ENCODE measurements at regions of chr2 and their contacts with region 1.

Region 1: DNA sequence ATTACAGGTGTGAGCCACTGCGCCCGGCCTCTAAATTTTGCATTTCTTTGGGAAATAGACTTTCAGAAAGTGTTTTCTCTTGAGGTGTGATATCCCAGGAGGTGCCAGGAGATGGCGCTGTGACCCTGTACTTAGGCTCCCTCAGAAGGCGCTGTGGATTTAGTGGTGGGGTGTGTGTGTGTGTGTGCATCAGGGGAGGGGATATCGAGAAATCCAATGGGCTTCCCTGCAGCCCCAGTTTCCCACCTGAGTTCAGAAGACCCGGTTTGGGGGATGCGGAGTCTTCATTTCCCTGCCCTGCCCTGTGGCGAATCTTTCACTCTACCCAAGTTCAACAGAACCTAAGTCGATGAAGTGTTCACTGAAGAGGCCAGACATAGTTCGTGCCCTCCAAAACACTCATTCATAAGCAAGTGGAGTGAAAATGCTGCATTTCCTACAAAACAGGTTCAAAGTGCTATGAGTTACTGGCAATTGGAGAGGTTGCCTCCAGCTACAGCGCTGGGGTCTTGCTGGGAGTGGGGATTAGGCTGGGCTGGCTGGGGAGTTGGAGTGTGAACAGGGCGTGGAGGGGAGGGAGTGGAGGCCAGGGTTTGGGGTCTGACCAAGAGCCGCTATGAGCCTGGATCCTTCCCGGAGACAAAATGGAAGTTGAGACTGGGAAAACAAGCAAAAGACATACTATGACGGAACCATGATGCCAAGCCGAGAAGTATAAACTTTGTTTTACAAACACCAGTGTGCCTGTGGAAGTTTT is 6.5 kb upstream of the WNT6 start:
- DNase-seq: peak; percentile 62 to 91
- H3K4me3 ChIP-seq: peak overlapping the region in 1 of 4 experiments; percentile 17; a peak in 1 of 8 replicates
- H3K27ac ChIP-seq: no peak overlapping the region
- H3K4me1 ChIP-seq: peaks cover 13 to 30% (median 17%) of the 10 kb centered on the region in 4 experiments
- H3K27me3 ChIP-seq: peaks cover 49 to 58% (median 52%) of the 10 kb centered on the region in 4 experiments
- CTCF ChIP-seq: peak; percentile 74 to 93 (median 84)
- EP300 ChIP-seq: no peak
- POLR2A ChIP-seq: no peak
- RAD21 ChIP-seq: peak; percentile 93 to 94

Region 2: GRCh38 chr2:218671654-218672566 is 181.2 kb before region 1 on chr2 and contains the starts of genes RNF25 and STK36:
- CTCF ChIA-PET with region 1: interaction called, 12 read pairs
- POLR2A ChIA-PET with region 1: interaction called, 3 read pairs
- DNase-seq: peak; percentile 74 to 85
- H3K4me3 ChIP-seq: peak within 1 kb of the TSS; percentile 96 to 99 (median 96)
- H3K27ac ChIP-seq: peak within 1 kb of the TSS; percentile 86
- H3K4me1 ChIP-seq: peaks cover 0 to 4% (median 1%) of the 10 kb centered on the region in 4 experiments; a peak in 3 of 7 replicates
- H3K27me3 ChIP-seq: no peaks in the 10 kb centered on the region
- CTCF ChIP-seq: no peak
- EP300 ChIP-seq: no peak
- POLR2A ChIP-seq: peak; percentile 70 to 74
- RAD21 ChIP-seq: no peak
- total RNA-seq, gene RNF25: 19.6 and 24.7 TPM in 2 replicates
- total RNA-seq, gene STK36: 34.9 and 41.4 TPM in 2 replicates

Region 3: DNA sequence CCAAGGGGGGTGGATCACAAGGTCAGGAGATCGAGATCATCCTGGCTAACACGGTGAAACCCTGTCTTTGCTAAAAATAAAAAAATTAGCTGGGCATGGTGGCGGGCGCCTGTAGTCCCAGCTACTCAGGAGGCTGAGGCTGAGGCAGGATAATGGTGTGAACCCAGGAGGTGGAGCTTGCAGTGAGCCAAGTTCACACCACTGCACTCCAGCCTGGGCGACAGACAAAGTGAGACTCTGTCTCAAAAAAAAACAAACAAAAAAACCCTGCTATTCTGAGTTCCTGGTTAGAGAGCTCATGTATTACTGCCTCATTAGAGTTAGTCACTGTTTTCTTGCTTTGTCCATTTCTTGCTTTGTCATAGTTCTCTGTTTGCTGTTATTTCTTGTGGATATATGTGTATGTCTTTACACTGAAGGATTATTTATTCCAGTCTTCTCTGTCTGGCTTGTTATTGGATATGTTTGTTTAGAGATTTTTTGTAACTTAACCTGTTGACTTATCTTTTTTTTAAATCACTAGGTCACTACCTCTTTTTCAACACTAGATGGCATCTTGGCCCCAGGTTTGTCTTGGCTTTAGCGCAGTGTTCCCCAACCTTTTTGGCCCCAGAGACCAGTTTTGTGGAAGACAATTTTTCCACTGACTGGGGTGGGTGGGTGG is 125.5 kb before region 1 on chr2:
- CTCF ChIA-PET with region 1: interaction called, 83 read pairs
- POLR2A ChIA-PET with region 1: interaction called, 4 read pairs
- DNase-seq: no peak
- H3K4me3 ChIP-seq: no peak overlapping the region
- H3K27ac ChIP-seq: no peak overlapping the region
- H3K4me1 ChIP-seq: peaks cover 0 to 12% (median 6%) of the 10 kb centered on the region in 4 experiments; a peak in 5 of 7 replicates
- H3K27me3 ChIP-seq: no peaks in the 10 kb centered on the region
- CTCF ChIP-seq: peak in 2 of 3 experiments; percentile 61 to 63; a peak in 3 of 4 replicates
- EP300 ChIP-seq: no peak
- POLR2A ChIP-seq: no peak
- RAD21 ChIP-seq: peak; percentile 74 to 75

Region 4: DNA sequence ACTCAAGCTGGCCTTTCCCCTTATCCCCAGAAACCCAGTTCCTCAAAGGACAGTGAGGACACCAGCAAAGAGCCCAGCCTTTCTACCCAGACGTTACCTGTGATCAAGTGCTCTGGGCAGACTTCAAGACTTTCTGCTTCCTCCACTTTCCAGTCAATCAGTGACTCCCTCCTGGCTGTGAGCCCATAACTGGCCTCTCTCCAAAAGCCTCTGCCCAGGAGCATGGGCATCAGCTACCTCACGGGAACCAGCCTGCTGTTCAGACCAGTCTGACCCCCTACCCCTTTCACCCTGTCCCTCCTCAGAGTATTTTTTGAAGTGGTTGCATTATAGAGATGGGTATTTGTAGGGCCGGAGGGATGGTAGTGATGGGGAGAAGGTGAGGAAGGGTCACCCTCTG is 98.9 kb before region 1 on chr2:
- CTCF ChIA-PET with region 1: interaction called, 39 read pairs
- POLR2A ChIA-PET with region 1: no interaction called
- DNase-seq: no peak
- H3K4me3 ChIP-seq: no peak overlapping the region
- H3K27ac ChIP-seq: no peak overlapping the region
- H3K4me1 ChIP-seq: no peaks in the 10 kb centered on the region
- H3K27me3 ChIP-seq: no peaks in the 10 kb centered on the region
- CTCF ChIP-seq: no peak
- EP300 ChIP-seq: no peak
- POLR2A ChIP-seq: no peak
- RAD21 ChIP-seq: no peak

Region 5: DNA sequence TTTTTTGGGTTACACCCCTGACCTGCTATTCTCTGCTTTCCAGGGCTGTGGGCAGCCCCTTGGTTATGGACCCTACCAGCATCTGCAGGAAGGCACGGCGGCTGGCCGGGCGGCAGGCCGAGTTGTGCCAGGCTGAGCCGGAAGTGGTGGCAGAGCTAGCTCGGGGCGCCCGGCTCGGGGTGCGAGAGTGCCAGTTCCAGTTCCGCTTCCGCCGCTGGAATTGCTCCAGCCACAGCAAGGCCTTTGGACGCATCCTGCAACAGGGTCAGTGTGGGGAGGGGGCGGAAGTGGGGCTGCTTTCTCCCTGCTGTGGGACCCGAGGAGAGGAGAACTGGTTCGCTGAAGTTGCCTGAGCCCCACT is 17.9 kb after region 1 on chr2:
- CTCF ChIA-PET with region 1: interaction called, 93 read pairs
- POLR2A ChIA-PET with region 1: no interaction called
- DNase-seq: no peak
- H3K4me3 ChIP-seq: peak overlapping the region in 1 of 4 experiments; percentile 43; a peak in 2 of 8 replicates
- H3K27ac ChIP-seq: no peak overlapping the region
- H3K4me1 ChIP-seq: peaks cover 0 to 24% (median 12%) of the 10 kb centered on the region in 4 experiments; a peak in 6 of 7 replicates
- H3K27me3 ChIP-seq: peaks cover 89 to 100% (median 96%) of the 10 kb centered on the region in 4 experiments
- CTCF ChIP-seq: no peak
- EP300 ChIP-seq: no peak
- POLR2A ChIP-seq: no peak
- RAD21 ChIP-seq: no peak

Region 6: DNA sequence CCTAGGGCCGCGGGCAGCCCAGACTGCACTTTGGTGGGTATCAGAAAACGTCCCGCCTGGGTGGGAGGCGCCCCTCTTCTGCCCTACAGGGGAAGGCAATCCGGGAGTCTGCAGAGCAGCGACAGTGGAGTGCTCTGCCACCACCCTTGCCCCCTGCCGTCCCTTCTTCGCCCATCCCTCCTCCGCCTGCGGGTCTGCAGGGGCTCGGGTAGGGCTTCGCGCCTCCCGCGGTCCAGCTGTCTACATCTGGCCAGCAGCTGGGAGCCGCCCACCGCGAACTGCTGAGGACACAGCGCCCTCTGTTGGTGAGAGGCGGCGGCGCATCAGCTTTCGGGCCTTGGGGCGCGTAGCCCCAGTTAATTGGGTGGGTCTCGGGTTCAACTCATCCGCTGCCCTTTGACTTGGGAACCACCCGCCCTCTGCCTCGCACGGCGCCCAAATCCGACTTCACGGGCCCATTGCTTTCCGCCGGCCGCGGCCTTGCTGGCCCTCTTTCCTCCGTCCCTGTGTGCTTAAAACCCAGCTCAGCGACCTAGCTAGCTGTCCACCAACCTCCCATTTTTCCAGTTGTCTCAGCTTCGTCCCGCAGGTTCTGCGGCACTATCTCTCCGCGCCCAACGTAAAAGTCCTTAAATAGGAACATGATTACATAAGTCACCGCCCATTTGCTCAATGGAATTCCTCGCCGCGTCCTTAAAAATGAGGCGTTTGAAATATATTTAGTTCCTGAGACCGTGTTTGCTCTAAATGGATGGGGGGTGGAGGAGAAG is 45.2 kb after region 1 on chr2:
- CTCF ChIA-PET with region 1: interaction called, 65 read pairs
- POLR2A ChIA-PET with region 1: interaction called, 3 read pairs
- DNase-seq: peak; percentile 68 to 99
- H3K4me3 ChIP-seq: peak overlapping the region in 1 of 4 experiments; percentile 54; a peak in 2 of 8 replicates
- H3K27ac ChIP-seq: no peak overlapping the region
- H3K4me1 ChIP-seq: peaks cover 3 to 35% (median 13%) of the 10 kb centered on the region in 4 experiments
- H3K27me3 ChIP-seq: peaks cover 64 to 81% (median 72%) of the 10 kb centered on the region in 4 experiments
- CTCF ChIP-seq: peak in 2 of 3 experiments; percentile 96 to 97; a peak in 3 of 4 replicates
- EP300 ChIP-seq: no peak
- POLR2A ChIP-seq: no peak
- RAD21 ChIP-seq: peak; percentile 82 to 92